Activated CD8-positive, alpha-beta T cell treated with anti-CD3 and anti-CD28 coated beads for 36 hours (primary cell): ENCODE measurements at regions of chr1 and their contacts with region 1.

Region 1: GRCh38 chr1:207868774-207869721 is 41.9 kb downstream of the CD34 start:
- DNase-seq: peak; percentile 67
- ATAC-seq: peak; percentile 52
- H3K4me3 Mint-ChIP-seq: peak overlapping the region; percentile 91
- H3K27ac Mint-ChIP-seq: peak overlapping the region; percentile 86
- H3K4me1 Mint-ChIP-seq: peaks cover 84% of the 10 kb centered on the region
- H3K27me3 Mint-ChIP-seq: no peaks in the 10 kb centered on the region
- CTCF ChIP-seq: peak; percentile 81

Region 2: GRCh38 chr1:207579436-207579799 is 289.6 kb before region 1 on chr1:
- CTCF ChIA-PET with region 1: no interaction called
- POLR2A ChIA-PET with region 1: no interaction called
- intact Hi-C with region 1: no loop called
- DNase-seq: peak; percentile 67
- ATAC-seq: peak; percentile 85
- H3K4me3 Mint-ChIP-seq: no peak overlapping the region
- H3K27ac Mint-ChIP-seq: no peak overlapping the region
- H3K4me1 Mint-ChIP-seq: peaks cover 5% of the 10 kb centered on the region
- H3K27me3 Mint-ChIP-seq: no peaks in the 10 kb centered on the region
- CTCF ChIP-seq: peak; percentile 61

Region 3: GRCh38 chr1:207797229-207797961 is 71.7 kb before region 1 on chr1:
- CTCF ChIA-PET with region 1: interaction called, 45 read pairs
- POLR2A ChIA-PET with region 1: interaction called, 3 read pairs
- intact Hi-C with region 1: no loop called
- DNase-seq: peak; percentile 92
- ATAC-seq: peak; percentile 91
- H3K4me3 Mint-ChIP-seq: no peak overlapping the region
- H3K27ac Mint-ChIP-seq: peak overlapping the region; percentile 11
- H3K4me1 Mint-ChIP-seq: peaks cover 36% of the 10 kb centered on the region
- H3K27me3 Mint-ChIP-seq: no peaks in the 10 kb centered on the region
- CTCF ChIP-seq: peak; percentile 76

Region 4: DNA sequence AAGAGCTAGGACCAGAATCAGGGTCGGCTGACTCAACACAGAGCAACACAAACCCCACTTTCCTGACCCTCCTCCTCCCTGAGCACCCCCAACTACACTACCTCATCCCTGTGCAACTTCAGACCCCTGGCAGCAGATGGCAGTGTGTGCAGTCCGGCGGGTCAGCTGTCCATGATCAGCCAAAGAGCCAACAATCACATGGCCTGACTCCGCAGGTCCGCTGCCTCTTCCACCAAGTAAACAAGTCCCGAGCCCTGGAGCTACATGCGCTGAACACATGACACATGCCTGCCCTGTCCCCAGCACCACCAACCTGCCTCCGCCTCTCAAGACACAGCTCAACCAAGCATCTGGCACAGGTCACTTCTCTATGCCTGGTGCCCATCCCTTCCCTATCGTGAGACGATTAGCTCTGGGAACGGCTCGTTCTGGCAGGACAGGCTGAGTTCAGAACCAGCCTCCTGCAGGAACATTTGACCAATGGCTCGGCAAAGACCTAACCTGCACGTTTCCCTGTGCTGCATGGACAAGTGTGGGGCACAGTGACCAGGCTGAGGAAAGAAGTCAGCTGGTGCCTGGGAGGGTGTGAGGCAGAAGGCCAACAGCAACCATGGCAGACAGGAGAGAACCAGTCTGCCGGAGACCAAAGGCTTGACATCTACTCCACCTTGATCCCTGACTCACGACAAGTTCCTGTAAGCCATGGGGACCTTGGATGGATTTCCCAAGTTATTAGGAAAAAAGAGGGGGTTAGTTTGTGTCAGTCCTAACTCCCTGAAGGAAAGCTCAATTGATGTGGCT is 56.9 kb before region 1 on chr1:
- CTCF ChIA-PET with region 1: interaction called, 15 read pairs
- POLR2A ChIA-PET with region 1: interaction called, 5 read pairs
- intact Hi-C with region 1: no loop called
- DNase-seq: no peak
- ATAC-seq: peak; percentile 57
- H3K4me3 Mint-ChIP-seq: no peak overlapping the region
- H3K27ac Mint-ChIP-seq: peak overlapping the region; percentile 67
- H3K4me1 Mint-ChIP-seq: peaks cover 60% of the 10 kb centered on the region
- H3K27me3 Mint-ChIP-seq: no peaks in the 10 kb centered on the region
- CTCF ChIP-seq: no peak

Region 5: GRCh38 chr1:207828485-207829158 is 40.4 kb before region 1 on chr1:
- CTCF ChIA-PET with region 1: interaction called, 387 read pairs
- POLR2A ChIA-PET with region 1: interaction called, 28 read pairs
- intact Hi-C with region 1: loop called (anchors 1 kb)
- DNase-seq: peak; percentile 73
- ATAC-seq: no peak
- H3K4me3 Mint-ChIP-seq: no peak overlapping the region
- H3K27ac Mint-ChIP-seq: peak overlapping the region; percentile 73
- H3K4me1 Mint-ChIP-seq: peaks cover 96% of the 10 kb centered on the region
- H3K27me3 Mint-ChIP-seq: no peaks in the 10 kb centered on the region
- CTCF ChIP-seq: peak; percentile 71

Region 6: GRCh38 chr1:207838156-207839082 is 30.6 kb before region 1 on chr1:
- CTCF ChIA-PET with region 1: interaction called, 387 read pairs
- POLR2A ChIA-PET with region 1: interaction called, 6 read pairs
- intact Hi-C with region 1: no loop called
- DNase-seq: no peak
- ATAC-seq: peak; percentile 31
- H3K4me3 Mint-ChIP-seq: no peak overlapping the region
- H3K27ac Mint-ChIP-seq: peak overlapping the region; percentile 73
- H3K4me1 Mint-ChIP-seq: peaks cover 72% of the 10 kb centered on the region
- H3K27me3 Mint-ChIP-seq: no peaks in the 10 kb centered on the region
- CTCF ChIP-seq: no peak

Region 7: DNA sequence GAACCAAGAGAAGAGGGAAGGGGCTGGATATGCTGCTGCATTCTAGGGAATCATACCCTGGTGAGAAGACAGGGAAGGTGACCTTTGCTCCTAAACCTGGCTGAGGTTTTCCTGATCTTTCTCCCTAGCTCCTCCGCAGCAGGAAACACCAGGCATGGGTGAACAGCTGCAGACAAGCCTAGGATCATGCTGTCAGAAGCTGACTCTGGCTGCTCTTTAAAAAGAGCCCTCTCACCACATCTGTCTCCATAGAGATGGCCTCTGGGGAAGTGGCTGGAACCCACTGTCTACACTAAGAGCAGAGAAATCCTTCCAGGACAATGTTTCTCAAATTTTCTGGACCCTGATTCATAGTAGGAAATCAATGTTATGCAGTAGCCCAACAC is 15.7 kb before region 1 on chr1:
- CTCF ChIA-PET with region 1: interaction called, 20 read pairs
- POLR2A ChIA-PET with region 1: interaction called, 42 read pairs
- intact Hi-C with region 1: no loop called
- DNase-seq: no peak
- ATAC-seq: no peak
- H3K4me3 Mint-ChIP-seq: no peak overlapping the region
- H3K27ac Mint-ChIP-seq: no peak overlapping the region
- H3K4me1 Mint-ChIP-seq: peaks cover 67% of the 10 kb centered on the region
- H3K27me3 Mint-ChIP-seq: no peaks in the 10 kb centered on the region
- CTCF ChIP-seq: no peak

Region 8: DNA sequence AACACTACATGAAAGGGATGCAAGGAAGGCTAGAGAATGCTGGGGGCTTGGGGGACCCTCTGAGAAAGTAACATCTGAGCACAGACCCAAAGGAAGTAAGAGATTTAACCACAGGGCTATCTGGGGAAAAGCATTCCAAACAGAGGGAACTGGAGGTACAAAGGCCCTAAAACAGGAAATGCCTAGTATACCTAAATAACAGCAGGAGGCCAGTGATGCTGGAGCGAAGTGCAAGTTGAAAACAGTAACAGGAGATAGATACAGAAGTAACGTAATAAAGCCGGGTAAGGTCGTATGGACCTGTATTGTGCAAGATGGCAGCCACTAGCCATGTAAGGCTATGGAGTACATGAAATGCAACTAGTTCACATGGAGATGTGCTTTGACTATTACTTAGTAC is 10.2 kb before region 1 on chr1:
- CTCF ChIA-PET with region 1: interaction called, 20 read pairs
- POLR2A ChIA-PET with region 1: interaction called, 42 read pairs
- intact Hi-C with region 1: no loop called
- DNase-seq: no peak
- ATAC-seq: no peak
- H3K4me3 Mint-ChIP-seq: no peak overlapping the region
- H3K27ac Mint-ChIP-seq: no peak overlapping the region
- H3K4me1 Mint-ChIP-seq: peaks cover 52% of the 10 kb centered on the region
- H3K27me3 Mint-ChIP-seq: no peaks in the 10 kb centered on the region
- CTCF ChIP-seq: no peak

Region 9: DNA sequence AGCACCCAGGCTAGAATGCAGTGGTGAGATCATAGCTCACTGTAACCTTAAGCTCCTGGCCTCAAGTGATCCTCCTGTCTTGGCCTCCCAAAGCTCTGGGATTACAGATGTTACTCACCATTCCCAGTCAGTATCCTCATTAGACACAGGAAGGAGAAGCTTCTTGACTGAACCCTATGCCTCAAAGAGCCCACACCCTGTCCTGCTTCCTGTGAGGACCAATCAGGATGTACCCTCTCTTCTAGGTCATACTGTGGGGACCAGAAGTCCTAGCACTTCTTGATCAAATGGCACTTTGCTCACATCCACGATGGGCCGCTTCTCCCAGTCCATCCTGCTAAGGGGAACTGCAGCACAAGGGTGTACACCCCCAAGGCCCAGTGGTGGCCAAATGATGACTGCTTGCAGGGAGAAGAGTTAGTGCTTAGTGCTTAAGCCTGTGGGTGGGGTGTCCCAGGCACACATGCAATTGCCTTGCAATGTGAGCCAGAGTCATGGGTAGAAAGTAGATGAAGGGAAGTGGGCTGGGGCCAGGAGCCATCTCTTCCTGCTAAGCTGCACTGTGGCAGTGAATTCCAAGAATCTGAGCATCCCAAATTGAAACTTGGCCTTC is 32.1 kb after region 1 on chr1:
- CTCF ChIA-PET with region 1: no interaction called
- POLR2A ChIA-PET with region 1: no interaction called
- intact Hi-C with region 1: no loop called
- DNase-seq: no peak
- ATAC-seq: no peak
- H3K4me3 Mint-ChIP-seq: no peak overlapping the region
- H3K27ac Mint-ChIP-seq: no peak overlapping the region
- H3K4me1 Mint-ChIP-seq: peaks cover 18% of the 10 kb centered on the region
- H3K27me3 Mint-ChIP-seq: no peaks in the 10 kb centered on the region
- CTCF ChIP-seq: no peak